PC-3 (cell line): ENCODE measurements at regions of chr1 and their contacts with region 1.

Region 1: GRCh38 chr1:2412519-2413233 is at the start of gene PEX10:
- DNase-seq: peak; percentile 99
- ATAC-seq: peak; percentile 75
- H3K4me3 ChIP-seq: peak within 1 kb of the TSS; percentile 84
- H3K27ac ChIP-seq: peak within 1 kb of the TSS; percentile 71
- H3K4me1 ChIP-seq: peaks cover 45% of the 10 kb centered on the region
- H3K27me3 ChIP-seq: no peaks in the 10 kb centered on the region
- CTCF ChIP-seq: no peak
- total RNA-seq, gene PEX10: 97.8 and 100 TPM in 2 replicates

Region 2: GRCh38 chr1:2429780-2430591 is 17.3 kb after region 1 on chr1:
- CTCF ChIA-PET with region 1: no interaction called
- POLR2A ChIA-PET with region 1: no interaction called
- intact Hi-C with region 1: no loop called
- DNase-seq: peak; percentile 67
- ATAC-seq: peak; percentile 39
- H3K4me3 ChIP-seq: no peak overlapping the region
- H3K27ac ChIP-seq: no peak overlapping the region
- H3K4me1 ChIP-seq: no peaks in the 10 kb centered on the region
- H3K27me3 ChIP-seq: peaks cover 19% of the 10 kb centered on the region
- CTCF ChIP-seq: peak; percentile 93

Region 3: DNA sequence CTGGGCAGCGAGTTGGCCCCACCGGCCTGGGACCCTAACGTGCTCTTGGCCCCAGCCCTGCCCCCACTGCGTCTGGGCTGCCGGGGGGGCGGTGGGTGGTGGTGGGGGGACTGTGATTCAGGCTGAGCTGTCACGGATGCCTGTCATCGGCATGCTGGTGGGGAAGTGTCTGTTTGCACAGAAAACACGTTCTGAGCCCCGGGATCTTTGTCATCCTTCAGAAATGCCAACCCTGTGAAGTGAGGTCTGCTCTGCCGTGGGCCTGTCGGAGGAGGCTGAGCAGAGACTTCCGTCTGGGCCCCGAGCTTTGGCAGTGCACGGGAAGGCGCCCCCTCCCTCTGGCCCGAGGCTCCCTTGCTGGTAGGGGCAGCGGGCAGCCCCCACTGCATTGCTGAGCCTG is 39.1 kb after region 1 on chr1:
- CTCF ChIA-PET with region 1: interaction called, 6 read pairs
- POLR2A ChIA-PET with region 1: no interaction called
- intact Hi-C with region 1: loop called (anchors 1 kb)
- DNase-seq: peak; percentile 99
- ATAC-seq: peak; percentile 83
- H3K4me3 ChIP-seq: peak overlapping the region; percentile 59
- H3K27ac ChIP-seq: peak overlapping the region; percentile 96
- H3K4me1 ChIP-seq: peaks cover 59% of the 10 kb centered on the region
- H3K27me3 ChIP-seq: no peaks in the 10 kb centered on the region
- CTCF ChIP-seq: no peak

Region 4: GRCh38 chr1:2525920-2526823 is 113.5 kb after region 1 on chr1 and contains the start of gene PANK4:
- CTCF ChIA-PET with region 1: interaction called, 15 read pairs
- POLR2A ChIA-PET with region 1: no interaction called
- intact Hi-C with region 1: no loop called
- DNase-seq: peak; percentile 98
- ATAC-seq: peak; percentile 92
- H3K4me3 ChIP-seq: peak within 1 kb of the TSS; percentile 93
- H3K27ac ChIP-seq: peak within 1 kb of the TSS; percentile 43
- H3K4me1 ChIP-seq: peaks cover 43% of the 10 kb centered on the region
- H3K27me3 ChIP-seq: no peaks in the 10 kb centered on the region
- CTCF ChIP-seq: no peak
- total RNA-seq, gene PANK4: 69.4 and 86.9 TPM in 2 replicates

Region 5: DNA sequence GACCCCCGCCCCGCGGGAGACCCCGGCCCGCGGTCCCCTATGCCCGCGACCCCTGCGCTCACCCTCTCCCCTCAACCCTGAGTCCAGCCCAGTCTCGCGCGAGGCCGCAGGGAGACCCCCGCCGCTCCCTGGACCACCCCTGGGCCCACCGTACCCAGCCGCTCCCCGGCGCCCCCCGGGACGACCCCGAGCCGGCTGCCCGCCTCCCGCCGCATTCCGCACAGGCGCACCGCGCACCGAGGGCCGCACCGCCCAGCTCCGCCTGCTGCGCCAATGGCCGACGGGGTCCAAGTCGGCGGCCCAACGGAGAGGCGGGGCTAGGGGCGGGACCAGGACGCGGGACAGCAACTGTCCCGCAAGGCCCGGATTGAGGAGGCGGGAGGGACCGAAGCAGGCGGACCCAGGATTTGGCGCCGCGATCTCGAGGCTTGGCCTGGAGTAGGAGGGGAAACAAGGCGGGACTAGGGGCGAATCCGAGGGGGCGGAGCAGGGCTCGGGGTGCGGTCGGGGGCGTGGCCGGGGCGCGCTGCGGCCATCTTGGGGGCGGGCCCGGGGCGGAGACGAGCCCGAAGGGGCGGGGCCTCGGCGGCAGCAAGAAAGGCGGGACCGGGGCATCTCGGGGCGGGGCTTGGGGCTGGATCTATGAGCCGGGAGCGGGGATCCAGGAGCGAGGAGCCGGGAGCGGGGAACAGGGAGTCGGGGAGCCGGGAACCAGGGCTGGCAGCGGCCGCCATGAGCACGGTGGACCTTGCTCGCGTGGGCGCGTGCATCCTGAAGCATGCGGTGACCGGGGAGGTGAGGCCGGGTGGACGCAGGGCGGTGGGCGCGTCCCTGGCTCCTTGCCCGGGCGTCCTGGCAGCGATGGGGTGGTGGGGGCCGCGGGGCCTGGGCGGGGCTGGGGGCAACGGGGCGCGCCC is 173.7 kb after region 1 on chr1 and contains the start of gene PRXL2B:
- CTCF ChIA-PET with region 1: no interaction called
- POLR2A ChIA-PET with region 1: no interaction called
- intact Hi-C with region 1: loop called (anchors 1 kb)
- DNase-seq: peak; percentile 99
- ATAC-seq: peak; percentile 84
- H3K4me3 ChIP-seq: peak within 1 kb of the TSS; percentile 96
- H3K27ac ChIP-seq: peak within 1 kb of the TSS; percentile 26
- H3K4me1 ChIP-seq: peaks cover 14% of the 10 kb centered on the region
- H3K27me3 ChIP-seq: no peaks in the 10 kb centered on the region
- CTCF ChIP-seq: no peak
- total RNA-seq, gene PRXL2B: 75.0 and 85.0 TPM in 2 replicates

Region 6: GRCh38 chr1:3423245-3423829 is 1010.7 kb after region 1 on chr1:
- CTCF ChIA-PET with region 1: no interaction called
- POLR2A ChIA-PET with region 1: no interaction called
- intact Hi-C with region 1: loop called (anchors 5 kb)
- DNase-seq: no peak
- ATAC-seq: no peak
- H3K4me3 ChIP-seq: no peak overlapping the region
- H3K27ac ChIP-seq: no peak overlapping the region
- H3K4me1 ChIP-seq: peaks cover 15% of the 10 kb centered on the region
- H3K27me3 ChIP-seq: peaks cover 65% of the 10 kb centered on the region
- CTCF ChIP-seq: no peak